Activated naive CD4-positive, alpha-beta T cell treated with anti-CD3 and anti-CD28 coated beads, Interleukin-2, amount 10 ng/mL, durations not matched to agents 7 days and 5 days (primary cell): ENCODE measurements at regions of chr2 and their contacts with region 1.

Region 1: GRCh38 chr2:68121873-68122679 is 35.6 kb upstream of the PNO1 start:
- DNase-seq: peak; percentile 84
- H3K4me3 Mint-ChIP-seq: no peak overlapping the region
- H3K27ac Mint-ChIP-seq: no peak overlapping the region
- H3K4me1 Mint-ChIP-seq: peaks cover 2% of the 10 kb centered on the region
- H3K27me3 Mint-ChIP-seq: peaks cover 4% of the 10 kb centered on the region

Region 2: GRCh38 chr2:68110102-68110501 is 12.0 kb before region 1 on chr2:
- CTCF ChIA-PET with region 1: interaction called, 12 read pairs
- DNase-seq: no peak
- H3K4me3 Mint-ChIP-seq: no peak overlapping the region
- H3K27ac Mint-ChIP-seq: no peak overlapping the region
- H3K4me1 Mint-ChIP-seq: no peaks in the 10 kb centered on the region
- H3K27me3 Mint-ChIP-seq: no peaks in the 10 kb centered on the region

Region 3: DNA sequence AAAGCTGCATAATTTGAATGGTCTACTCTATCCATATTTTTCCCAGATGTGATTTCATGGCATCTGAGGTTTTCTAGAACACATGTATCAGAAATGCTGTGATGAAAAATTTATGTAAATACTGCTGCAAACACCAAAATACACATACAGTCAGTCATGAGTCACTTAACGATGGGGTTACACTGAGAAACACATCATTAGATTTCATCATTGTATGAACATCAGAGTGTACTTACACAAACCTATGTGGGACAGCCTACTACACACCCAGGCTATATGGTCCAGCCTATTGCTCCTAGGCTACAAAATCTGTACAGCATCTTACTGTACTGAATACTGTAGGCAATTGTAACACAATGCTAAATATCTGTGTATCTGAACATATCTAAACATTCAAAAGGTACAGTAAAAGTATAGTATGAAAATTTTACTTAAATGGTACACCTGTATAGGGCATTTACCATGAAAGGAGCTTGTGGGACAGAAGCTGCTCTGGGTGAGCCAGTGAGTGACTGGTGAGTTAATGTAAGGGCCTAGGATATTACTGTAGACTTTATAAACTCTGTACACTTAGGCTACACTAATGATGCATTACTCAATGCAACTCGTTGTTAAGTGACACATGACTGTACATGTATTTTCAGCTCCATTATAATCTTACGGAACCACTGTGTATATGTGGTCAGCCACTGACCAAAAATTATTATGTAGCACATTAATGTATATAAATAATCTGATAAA is 69.1 kb after region 1 on chr2:
- CTCF ChIA-PET with region 1: interaction called, 11 read pairs
- DNase-seq: no peak
- H3K4me3 Mint-ChIP-seq: no peak overlapping the region
- H3K27ac Mint-ChIP-seq: no peak overlapping the region
- H3K4me1 Mint-ChIP-seq: peaks cover 20% of the 10 kb centered on the region
- H3K27me3 Mint-ChIP-seq: no peaks in the 10 kb centered on the region

Region 4: GRCh38 chr2:68282811-68283418 is 160.8 kb after region 1 on chr2:
- CTCF ChIA-PET with region 1: interaction called, 82 read pairs
- DNase-seq: peak; percentile 27
- H3K4me3 Mint-ChIP-seq: no peak overlapping the region
- H3K27ac Mint-ChIP-seq: no peak overlapping the region
- H3K4me1 Mint-ChIP-seq: no peaks in the 10 kb centered on the region
- H3K27me3 Mint-ChIP-seq: peaks cover 24% of the 10 kb centered on the region